PC-9 (cell line): ENCODE measurements at regions of chr18 and their contacts with region 1.

Region 1: GRCh38 chr18:63339920-63340484 is 20.4 kb upstream of the BCL2 start:
- DNase-seq: no peak
- H3K4me3 ChIP-seq: no peak overlapping the region
- H3K27ac ChIP-seq: no peak overlapping the region
- H3K4me1 ChIP-seq: peaks cover 21% of the 10 kb centered on the region
- H3K27me3 ChIP-seq: no peaks in the 10 kb centered on the region
- CTCF ChIP-seq: peak; percentile 68

Region 2: DNA sequence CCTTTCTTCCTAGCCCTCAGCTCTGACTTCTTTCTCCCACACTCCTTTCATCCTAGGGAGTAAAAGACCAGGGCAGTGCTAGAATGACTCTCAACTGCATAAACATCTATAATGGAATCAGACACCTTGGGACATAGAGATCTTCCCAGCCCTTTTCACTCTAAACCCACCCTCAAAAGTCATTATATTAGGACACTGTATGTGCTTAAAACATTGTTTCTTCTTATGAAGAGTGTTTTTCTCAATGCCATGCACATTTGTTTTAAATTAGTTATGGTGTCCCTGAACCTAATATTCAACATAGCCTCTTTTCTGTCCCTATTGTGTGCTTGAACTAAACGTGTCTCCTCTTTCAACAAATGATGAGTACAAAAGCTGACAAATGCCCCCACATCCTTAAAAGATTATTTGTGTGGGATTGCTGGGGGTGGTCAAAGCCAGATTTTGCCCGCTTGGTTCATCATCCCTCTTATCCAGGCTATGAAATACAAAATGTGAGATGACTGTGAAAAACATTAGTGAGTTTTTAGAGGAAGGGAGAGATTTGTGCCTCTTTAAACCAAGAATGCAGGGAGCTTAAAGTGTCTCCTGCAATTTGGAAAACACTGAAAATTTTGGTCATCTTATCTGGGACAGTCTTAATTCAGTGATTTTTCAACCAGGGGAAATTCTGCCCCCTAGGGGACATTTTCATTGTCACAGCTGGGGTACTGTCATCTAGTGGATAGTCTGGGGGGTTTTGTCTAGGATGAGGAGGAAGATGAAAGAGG is 165.7 kb after region 1 on chr18:
- CTCF ChIA-PET with region 1: no interaction called
- POLR2A ChIA-PET with region 1: no interaction called
- intact Hi-C with region 1: loop called (anchors 10 kb)
- DNase-seq: peak in 1 of 2 experiments; percentile 25
- H3K4me3 ChIP-seq: no peak overlapping the region
- H3K27ac ChIP-seq: no peak overlapping the region
- H3K4me1 ChIP-seq: peaks cover 12% of the 10 kb centered on the region
- H3K27me3 ChIP-seq: no peaks in the 10 kb centered on the region
- CTCF ChIP-seq: peak; percentile 80